ENCODE measurements at regions of chr5 and their contacts with region 1.

Region 1: GRCh38 chr5:148730943-148731861 is 76.9 kb upstream of the HTR4 start:
- DNase-seq: peak; percentile 89
- H3K4me3 ChIP-seq: no peak overlapping the region
- H3K27ac ChIP-seq: no peak overlapping the region
- H3K4me1 ChIP-seq: peaks cover 23% of the 10 kb centered on the region
- H3K27me3 ChIP-seq: no peaks in the 10 kb centered on the region
- CTCF ChIP-seq: peak; percentile 78 to 82
- POLR2A ChIP-seq: no peak

Region 2: GRCh38 chr5:148172377-148172776 is 558.8 kb before region 1 on chr5:
- CTCF ChIA-PET with region 1: interaction called, 36 read pairs
- POLR2A ChIA-PET with region 1: no interaction called
- dilution Hi-C with region 1: no loop called
- intact Hi-C with region 1: no loop called
- DNase-seq: no peak
- H3K4me3 ChIP-seq: no peak overlapping the region
- H3K27ac ChIP-seq: no peak overlapping the region
- H3K4me1 ChIP-seq: no peaks in the 10 kb centered on the region
- H3K27me3 ChIP-seq: no peaks in the 10 kb centered on the region
- CTCF ChIP-seq: no peak
- POLR2A ChIP-seq: no peak

Region 3: DNA sequence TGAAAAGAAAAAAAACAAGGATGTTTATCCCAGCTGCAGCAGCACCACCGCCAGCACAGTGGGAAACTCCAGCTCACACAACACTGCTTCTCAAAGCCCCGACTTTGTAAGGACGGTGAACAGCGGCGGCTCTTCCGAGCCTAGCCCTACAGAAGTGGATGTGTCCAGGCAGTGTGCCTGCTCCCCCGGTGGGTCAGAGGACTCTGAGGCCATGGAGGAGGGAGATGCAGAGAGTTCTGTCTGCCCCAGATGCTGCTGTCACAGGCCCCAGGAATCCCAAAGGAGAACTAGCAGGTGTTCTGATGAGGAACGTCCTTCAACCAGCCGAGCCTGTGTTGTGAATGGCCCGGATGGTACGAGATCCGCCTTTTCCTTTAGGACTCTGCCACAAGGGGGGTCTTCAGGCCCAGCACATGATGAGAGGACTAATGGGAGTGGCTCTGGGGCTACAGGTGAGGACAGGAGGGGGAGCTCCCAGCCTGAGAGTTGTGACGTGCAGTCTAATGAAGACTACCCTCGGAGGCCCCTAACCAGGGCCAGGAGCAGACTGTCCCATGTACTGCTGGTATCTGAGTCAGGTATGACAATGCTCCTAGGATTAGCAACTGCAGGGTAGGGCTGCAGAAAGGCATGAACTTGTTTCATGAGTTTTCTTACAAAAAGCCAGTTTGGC is 303.7 kb before region 1 on chr5:
- CTCF ChIA-PET with region 1: interaction called, 21 read pairs
- POLR2A ChIA-PET with region 1: no interaction called
- dilution Hi-C with region 1: no loop called
- intact Hi-C with region 1: no loop called
- DNase-seq: no peak
- H3K4me3 ChIP-seq: no peak overlapping the region
- H3K27ac ChIP-seq: no peak overlapping the region
- H3K4me1 ChIP-seq: no peaks in the 10 kb centered on the region
- H3K27me3 ChIP-seq: no peaks in the 10 kb centered on the region
- CTCF ChIP-seq: no peak
- POLR2A ChIP-seq: no peak

Region 4: DNA sequence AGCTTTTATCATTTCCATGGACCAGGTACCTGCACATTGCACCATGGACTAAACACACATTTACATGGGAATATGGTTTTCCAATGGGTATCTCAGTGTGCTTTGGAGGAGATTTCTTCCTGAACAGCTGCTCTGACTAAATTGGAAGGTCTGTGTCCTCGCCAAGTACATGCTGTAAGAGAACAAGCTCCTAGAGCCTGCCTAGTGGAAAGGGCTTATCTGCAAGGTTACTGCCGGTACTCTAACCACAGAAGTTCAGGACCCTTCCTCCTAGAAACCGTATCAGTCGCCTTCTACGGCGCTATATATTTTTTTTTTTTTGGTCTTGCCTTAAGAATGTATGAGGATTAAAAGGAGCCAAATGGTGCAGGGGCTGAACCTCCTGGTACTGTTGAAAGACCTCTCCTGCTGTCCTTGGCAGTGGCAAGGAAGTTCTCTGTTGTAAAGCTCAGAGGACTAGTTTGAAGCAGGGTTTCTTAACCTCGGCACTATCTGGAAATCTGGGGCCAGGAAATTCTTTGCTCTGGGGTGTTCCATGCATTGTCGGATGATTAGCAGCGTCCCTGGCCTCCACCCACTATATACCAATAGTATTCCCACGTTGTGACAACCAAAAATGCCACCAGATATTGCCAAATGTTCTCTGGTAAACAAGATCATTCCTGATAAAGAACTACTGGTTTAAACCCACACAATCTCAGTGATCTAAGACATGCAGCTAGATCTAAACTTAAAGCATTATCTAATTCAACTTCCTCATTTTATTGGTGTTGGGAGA is 240.0 kb before region 1 on chr5:
- CTCF ChIA-PET with region 1: interaction called, 17 read pairs
- POLR2A ChIA-PET with region 1: no interaction called
- dilution Hi-C with region 1: no loop called
- intact Hi-C with region 1: no loop called
- DNase-seq: no peak
- H3K4me3 ChIP-seq: no peak overlapping the region
- H3K27ac ChIP-seq: no peak overlapping the region
- H3K4me1 ChIP-seq: no peaks in the 10 kb centered on the region
- H3K27me3 ChIP-seq: peaks cover 6 to 29% of the 10 kb centered on the region in 2 experiments
- CTCF ChIP-seq: no peak
- POLR2A ChIP-seq: no peak

Region 5: DNA sequence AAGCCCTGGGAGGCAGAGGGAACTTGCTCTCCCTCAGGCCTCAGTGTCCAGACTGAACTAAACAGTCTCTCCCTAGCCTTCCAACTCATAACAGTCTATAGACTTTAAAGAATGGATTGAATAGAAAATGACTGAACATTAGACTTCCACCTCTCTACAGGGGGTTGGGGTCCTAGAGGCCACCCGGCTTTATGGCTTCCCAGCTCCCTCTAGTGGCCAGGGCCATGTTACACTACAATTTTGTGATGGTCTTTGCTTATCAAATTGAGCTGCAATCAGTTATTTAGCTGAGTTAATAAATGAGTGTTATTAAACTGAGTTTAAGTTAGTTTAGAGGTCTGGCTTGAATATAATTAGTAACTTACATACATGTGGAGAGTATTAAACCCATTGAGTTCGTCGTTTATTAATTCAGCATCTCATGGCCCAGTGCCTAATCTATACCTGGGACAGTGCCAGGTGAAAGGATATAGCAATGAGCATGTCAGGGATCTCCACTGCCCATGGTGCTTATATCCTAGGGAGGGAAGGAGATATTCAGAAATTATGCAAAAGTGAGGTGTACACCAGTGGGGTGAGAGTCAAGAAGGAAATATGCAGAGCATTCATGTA is 226.5 kb after region 1 on chr5:
- CTCF ChIA-PET with region 1: interaction called, 94 read pairs
- POLR2A ChIA-PET with region 1: no interaction called
- dilution Hi-C with region 1: no loop called
- intact Hi-C with region 1: loop called (anchors 1 kb)
- DNase-seq: peak; percentile 66
- H3K4me3 ChIP-seq: no peak overlapping the region
- H3K27ac ChIP-seq: no peak overlapping the region
- H3K4me1 ChIP-seq: no peaks in the 10 kb centered on the region
- H3K27me3 ChIP-seq: no peaks in the 10 kb centered on the region
- CTCF ChIP-seq: peak; percentile 77 to 88
- POLR2A ChIP-seq: no peak

Region 6: DNA sequence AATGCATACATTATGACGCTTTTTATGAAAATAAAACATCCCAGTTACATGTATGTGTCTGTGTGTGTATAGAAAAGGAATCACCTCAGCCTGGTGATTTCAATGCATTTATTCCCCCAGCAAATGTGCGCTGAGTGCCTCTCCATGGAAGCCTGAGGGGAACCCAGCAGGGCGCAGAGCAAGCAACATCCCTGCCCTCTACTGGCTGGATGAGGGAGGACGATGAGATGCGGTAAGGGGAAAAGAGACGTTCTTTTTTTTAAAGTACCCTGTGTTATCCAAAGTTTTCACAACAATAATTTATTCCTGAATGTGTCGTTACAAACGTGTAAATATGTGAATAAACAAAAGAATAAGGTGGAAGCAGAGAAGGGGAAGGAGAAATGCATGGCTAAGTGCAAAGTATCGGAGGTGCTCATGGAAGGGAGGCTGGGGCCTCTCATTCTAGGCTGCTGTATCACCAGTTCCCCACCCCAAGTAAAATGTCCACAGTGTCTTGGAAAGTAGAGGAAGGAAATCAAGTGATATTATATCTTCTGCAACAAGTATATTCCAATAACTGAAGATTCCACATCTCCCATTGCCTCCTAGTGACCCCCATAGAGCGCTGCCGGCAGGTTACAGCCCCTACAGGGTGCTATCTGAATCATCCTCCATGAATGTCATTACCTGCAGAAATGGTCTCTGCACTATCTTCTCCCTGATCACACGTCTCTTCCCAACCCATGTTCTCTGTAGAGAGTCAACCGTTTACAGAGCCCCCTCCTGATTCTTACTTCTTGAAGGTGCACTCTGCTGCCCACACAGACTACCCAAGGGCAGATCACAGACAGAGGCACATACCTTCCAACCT is 397.0 kb after region 1 on chr5:
- CTCF ChIA-PET with region 1: interaction called, 11 read pairs
- POLR2A ChIA-PET with region 1: no interaction called
- dilution Hi-C with region 1: loop called (anchors 25 kb)
- intact Hi-C with region 1: loop called (anchors 1 kb)
- DNase-seq: peak; percentile 16
- H3K4me3 ChIP-seq: no peak overlapping the region
- H3K27ac ChIP-seq: no peak overlapping the region
- H3K4me1 ChIP-seq: peaks cover 12% of the 10 kb centered on the region
- H3K27me3 ChIP-seq: no peaks in the 10 kb centered on the region
- CTCF ChIP-seq: peak; percentile 75 to 80
- POLR2A ChIP-seq: no peak

Measured in endothelial cell of umbilical vein (primary cell).